ENCODE measurements at regions of chr4 and their contacts with region 1.

Region 1: GRCh38 chr4:100421361-100421978 is 96.4 kb downstream of the EMCN start:
- DNase-seq: no peak
- H3K4me3 Mint-ChIP-seq: no peak overlapping the region
- H3K27ac Mint-ChIP-seq: no peak overlapping the region
- H3K4me1 Mint-ChIP-seq: peaks cover 2% of the 10 kb centered on the region
- H3K27me3 Mint-ChIP-seq: no peaks in the 10 kb centered on the region

Region 2: DNA sequence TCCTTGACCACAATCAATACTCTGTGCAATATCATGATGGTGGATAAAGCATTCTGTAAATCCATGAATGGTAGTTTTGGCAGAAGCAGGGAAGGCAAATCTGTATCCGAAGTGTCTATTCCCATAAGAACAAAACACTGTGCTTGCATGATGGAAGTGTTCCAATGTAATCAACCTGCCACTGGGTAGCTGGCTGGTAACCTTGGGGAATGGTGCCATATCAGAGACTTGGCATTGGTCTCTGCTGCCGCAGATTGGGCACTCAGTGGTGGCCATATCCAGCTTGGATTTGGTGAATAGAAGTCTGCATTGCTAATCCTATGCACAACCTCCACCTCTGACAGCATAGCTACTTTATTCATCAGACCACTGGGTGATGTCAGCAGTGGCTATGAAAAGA is 210.7 kb after region 1 on chr4:
- CTCF ChIA-PET with region 1: no interaction called
- intact Hi-C with region 1: loop called (anchors 5 kb)
- DNase-seq: no peak
- H3K4me3 Mint-ChIP-seq: no peak overlapping the region
- H3K27ac Mint-ChIP-seq: no peak overlapping the region
- H3K4me1 Mint-ChIP-seq: no peaks in the 10 kb centered on the region
- H3K27me3 Mint-ChIP-seq: no peaks in the 10 kb centered on the region

Region 3: GRCh38 chr4:100742045-100742444 is 320.6 kb after region 1 on chr4:
- CTCF ChIA-PET with region 1: no interaction called
- intact Hi-C with region 1: loop called (anchors 1 kb)
- DNase-seq: no peak
- H3K4me3 Mint-ChIP-seq: no peak overlapping the region
- H3K27ac Mint-ChIP-seq: no peak overlapping the region
- H3K4me1 Mint-ChIP-seq: no peaks in the 10 kb centered on the region
- H3K27me3 Mint-ChIP-seq: no peaks in the 10 kb centered on the region

Measured in activated naive CD4-positive, alpha-beta T cell treated with anti-CD3 and anti-CD28 coated beads for 36 hours (primary cell).